Activated CD4-positive, alpha-beta T cell treated with anti-CD3 and anti-CD28 coated beads, Interleukin-2, amount 10 ng/mL, durations not matched to agents 24 days and 14 days (primary cell): ENCODE measurements at regions of chr17 and their contacts with region 1.

Region 1: DNA sequence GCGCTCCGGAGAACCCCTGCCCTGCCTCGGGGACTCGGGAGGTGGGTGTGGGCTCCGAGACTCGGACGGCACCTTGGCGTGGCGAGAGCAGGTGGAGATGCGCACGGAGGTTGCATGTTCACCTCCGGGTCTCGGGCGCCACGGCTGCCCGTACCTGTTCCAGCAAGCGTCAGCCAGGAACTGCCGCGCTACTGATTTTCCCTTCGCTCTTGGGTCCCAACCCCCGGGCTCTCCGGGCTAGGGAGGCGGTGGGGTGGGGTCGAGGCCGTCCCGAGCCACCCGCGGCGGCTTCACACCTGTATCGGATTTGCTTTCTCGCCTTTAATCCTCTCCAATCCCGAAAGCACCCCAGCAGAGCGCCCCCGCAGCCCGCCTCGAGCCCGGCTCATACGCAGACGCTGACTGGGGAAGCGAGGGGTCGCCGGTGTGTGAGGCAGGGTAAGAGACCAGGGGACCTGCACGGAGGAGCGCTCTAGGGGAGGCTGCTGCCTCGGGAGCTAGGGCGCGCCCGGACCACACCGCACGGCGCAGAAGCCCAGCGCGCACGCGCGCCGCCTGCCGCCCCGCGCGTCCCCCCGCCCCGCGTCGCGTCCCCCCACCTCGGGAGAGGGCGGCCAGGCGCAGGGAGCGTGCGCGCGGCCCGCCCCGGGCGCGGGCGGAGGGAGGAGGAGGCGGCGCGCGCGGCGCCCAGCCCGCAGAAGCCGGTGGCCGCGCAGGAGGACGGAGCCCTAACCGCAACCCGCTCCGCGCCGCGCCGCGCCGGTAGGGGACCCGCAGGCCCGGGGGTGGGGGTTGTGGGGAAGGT is at the start of gene DUSP14:
- DNase-seq: peak; percentile 95
- H3K4me3 Mint-ChIP-seq: peak within 1 kb of the TSS; percentile 92
- H3K27ac Mint-ChIP-seq: peak within 1 kb of the TSS; percentile 97
- H3K4me1 Mint-ChIP-seq: peaks cover 39% of the 10 kb centered on the region
- H3K27me3 Mint-ChIP-seq: no peaks in the 10 kb centered on the region
- total RNA-seq, gene DUSP14: 18.7 and 20.2 TPM in 2 replicates

Region 2: GRCh38 chr17:37430051-37430627 is 59.3 kb before region 1 on chr17:
- intact Hi-C with region 1: loop called (anchors 1 kb)
- DNase-seq: peak; percentile 59
- H3K4me3 Mint-ChIP-seq: peak overlapping the region; percentile 52
- H3K27ac Mint-ChIP-seq: peak overlapping the region; percentile 93
- H3K4me1 Mint-ChIP-seq: peaks cover 27% of the 10 kb centered on the region
- H3K27me3 Mint-ChIP-seq: no peaks in the 10 kb centered on the region

Region 3: GRCh38 chr17:37598145-37598544 is 108.7 kb after region 1 on chr17:
- intact Hi-C with region 1: no loop called
- DNase-seq: no peak
- H3K4me3 Mint-ChIP-seq: no peak overlapping the region
- H3K27ac Mint-ChIP-seq: no peak overlapping the region
- H3K4me1 Mint-ChIP-seq: peaks cover 31% of the 10 kb centered on the region
- H3K27me3 Mint-ChIP-seq: no peaks in the 10 kb centered on the region